ENCODE measurements at regions of chr22 and their contacts with region 1.

Region 1: GRCh38 chr22:43993027-43993760 is 30.9 kb upstream of the PARVB start:
- DNase-seq: peak; percentile 82
- ATAC-seq: peak; percentile 65
- H3K4me3 ChIP-seq: no peak overlapping the region
- H3K4me3 Mint-ChIP-seq: no peak overlapping the region
- H3K27ac ChIP-seq: peak overlapping the region in 1 of 2 donors; percentile 94
- H3K27ac Mint-ChIP-seq: peak overlapping the region; percentile 59
- H3K4me1 ChIP-seq: peaks cover 27 to 40% of the 10 kb centered on the region in 2 donors
- H3K4me1 Mint-ChIP-seq: peaks cover 46% of the 10 kb centered on the region
- H3K27me3 ChIP-seq: no peaks in the 10 kb centered on the region
- H3K27me3 Mint-ChIP-seq: no peaks in the 10 kb centered on the region
- CTCF ChIP-seq: peak; percentile 97

Region 2: DNA sequence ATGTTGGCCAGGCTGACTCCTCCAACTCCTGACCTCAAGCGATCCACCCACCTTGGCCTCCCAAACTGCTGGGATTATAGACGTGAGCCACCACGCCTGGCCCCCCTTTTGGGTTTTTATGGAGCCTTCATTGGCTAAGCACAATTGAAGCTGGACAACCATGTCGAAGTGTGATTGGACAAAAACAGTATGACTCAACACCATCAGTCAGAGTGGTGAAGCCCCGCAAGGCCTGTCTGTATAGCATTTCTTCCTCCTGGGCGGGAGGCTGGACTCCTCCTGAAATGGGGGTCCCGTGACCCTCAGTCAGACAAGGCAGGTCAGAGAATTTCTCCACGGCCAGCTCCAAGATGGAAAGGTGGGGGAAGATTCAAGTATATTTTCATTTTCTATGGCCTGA is 27.8 kb after region 1 on chr22:
- CTCF ChIA-PET with region 1: interaction called, 29 read pairs
- POLR2A ChIA-PET with region 1: interaction called, 3 read pairs
- intact Hi-C with region 1: loop called (anchors 1 kb)
- DNase-seq: no peak
- ATAC-seq: no peak
- H3K4me3 ChIP-seq: no peak overlapping the region
- H3K4me3 Mint-ChIP-seq: no peak overlapping the region
- H3K27ac ChIP-seq: no peak overlapping the region
- H3K27ac Mint-ChIP-seq: no peak overlapping the region
- H3K4me1 ChIP-seq: peaks cover 22 to 30% of the 10 kb centered on the region in 2 donors
- H3K4me1 Mint-ChIP-seq: peaks cover 38% of the 10 kb centered on the region
- H3K27me3 ChIP-seq: no peaks in the 10 kb centered on the region
- H3K27me3 Mint-ChIP-seq: no peaks in the 10 kb centered on the region
- CTCF ChIP-seq: no peak

Region 3: DNA sequence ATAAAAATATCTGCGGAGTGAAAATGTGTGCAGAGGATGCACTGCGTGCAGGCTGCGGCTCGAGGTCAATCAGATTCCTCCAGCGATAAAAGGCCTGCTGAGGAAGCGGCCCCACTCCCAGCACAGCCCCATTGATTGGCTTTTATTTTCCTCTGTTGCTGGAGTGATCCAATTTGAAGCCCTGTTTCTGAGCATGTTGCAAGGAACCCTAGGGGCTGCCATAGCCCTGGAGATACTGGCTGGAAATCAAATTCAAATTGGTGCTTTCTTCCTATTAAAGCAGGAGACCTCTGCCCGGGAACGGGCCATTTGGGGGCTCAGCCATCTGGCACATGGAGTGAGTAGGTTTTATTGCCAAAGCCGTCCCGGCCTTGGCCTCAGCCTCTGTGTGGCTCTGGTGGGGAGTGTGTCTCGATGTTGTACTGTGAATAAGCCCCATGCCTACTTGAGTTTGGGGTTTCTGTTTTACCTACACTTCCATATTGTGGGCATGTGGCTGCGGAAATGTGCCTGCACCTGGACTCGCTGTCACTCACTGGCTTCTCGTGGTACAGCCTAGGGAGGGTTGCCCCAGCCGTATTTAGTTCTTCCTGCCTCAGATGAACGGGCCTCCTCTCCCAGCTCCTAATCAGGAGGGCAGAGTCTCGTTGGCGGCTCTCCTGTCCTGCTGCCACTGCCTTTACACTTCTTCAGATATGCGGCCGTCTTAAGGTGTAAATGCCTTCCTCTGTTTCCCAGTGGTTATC is 56.5 kb after region 1 on chr22:
- CTCF ChIA-PET with region 1: interaction called, 10 read pairs
- POLR2A ChIA-PET with region 1: no interaction called
- intact Hi-C with region 1: no loop called
- DNase-seq: peak; percentile 37
- ATAC-seq: no peak
- H3K4me3 ChIP-seq: no peak overlapping the region
- H3K4me3 Mint-ChIP-seq: peak overlapping the region; percentile 55
- H3K27ac ChIP-seq: no peak overlapping the region
- H3K27ac Mint-ChIP-seq: no peak overlapping the region
- H3K4me1 ChIP-seq: peaks cover 17 to 19% of the 10 kb centered on the region in 2 donors
- H3K4me1 Mint-ChIP-seq: peaks cover 60% of the 10 kb centered on the region
- H3K27me3 ChIP-seq: no peaks in the 10 kb centered on the region
- H3K27me3 Mint-ChIP-seq: no peaks in the 10 kb centered on the region
- CTCF ChIP-seq: no peak

Region 4: GRCh38 chr22:44080936-44081861 is 88.0 kb after region 1 on chr22:
- CTCF ChIA-PET with region 1: interaction called, 691 read pairs
- POLR2A ChIA-PET with region 1: interaction called, 13 read pairs
- intact Hi-C with region 1: loop called (anchors 1 kb)
- DNase-seq: peak; percentile 80
- ATAC-seq: peak; percentile 61
- H3K4me3 ChIP-seq: no peak overlapping the region
- H3K4me3 Mint-ChIP-seq: no peak overlapping the region
- H3K27ac ChIP-seq: no peak overlapping the region
- H3K27ac Mint-ChIP-seq: no peak overlapping the region
- H3K4me1 ChIP-seq: peaks cover 0 to 9% of the 10 kb centered on the region in 2 donors
- H3K4me1 Mint-ChIP-seq: peaks cover 2% of the 10 kb centered on the region
- H3K27me3 ChIP-seq: no peaks in the 10 kb centered on the region
- H3K27me3 Mint-ChIP-seq: no peaks in the 10 kb centered on the region
- CTCF ChIP-seq: peak; percentile 90

Region 5: DNA sequence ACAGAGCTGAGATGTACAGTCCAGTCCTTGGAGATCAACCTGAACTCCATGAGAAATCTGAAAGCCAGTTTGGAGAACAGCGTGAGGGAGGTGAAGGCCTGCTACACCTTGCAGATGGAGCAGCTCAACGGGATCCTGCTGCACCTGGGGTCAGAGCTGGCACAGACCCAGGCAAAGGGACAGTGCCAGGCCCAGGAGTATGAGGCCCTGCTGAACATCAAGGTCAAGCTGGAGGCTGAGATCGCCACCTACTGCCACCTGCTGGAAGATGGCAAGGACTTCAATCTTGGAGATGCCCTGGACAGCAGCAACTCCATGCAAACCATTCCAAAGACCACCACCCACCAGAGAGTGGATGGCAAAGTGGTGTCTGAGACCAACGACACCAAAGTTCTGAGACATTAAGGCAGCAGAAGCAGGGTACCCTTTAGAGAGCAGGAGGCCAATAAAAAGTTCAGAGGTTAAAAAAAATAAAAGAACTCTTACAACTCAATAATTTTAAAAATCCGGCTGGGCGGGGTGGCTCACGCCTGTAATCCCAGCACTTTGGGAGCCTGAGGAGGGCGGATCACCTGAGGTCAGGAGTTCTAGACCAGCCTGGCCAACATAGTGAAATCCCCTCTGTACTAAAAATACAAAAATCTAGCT is 574.8 kb after region 1 on chr22:
- CTCF ChIA-PET with region 1: interaction called, 33 read pairs
- POLR2A ChIA-PET with region 1: no interaction called
- intact Hi-C with region 1: no loop called
- DNase-seq: peak; percentile 34
- ATAC-seq: no peak
- H3K4me3 ChIP-seq: no peak overlapping the region
- H3K4me3 Mint-ChIP-seq: no peak overlapping the region
- H3K27ac ChIP-seq: no peak overlapping the region
- H3K27ac Mint-ChIP-seq: no peak overlapping the region
- H3K4me1 ChIP-seq: no peaks in the 10 kb centered on the region
- H3K4me1 Mint-ChIP-seq: no peaks in the 10 kb centered on the region
- H3K27me3 ChIP-seq: no peaks in the 10 kb centered on the region
- H3K27me3 Mint-ChIP-seq: peaks cover 19% of the 10 kb centered on the region
- CTCF ChIP-seq: peak; percentile 46